Left cardiac atrium (tissue), 4 donors: ENCODE measurements at regions of chr10 and their contacts with region 1.

Region 1: DNA sequence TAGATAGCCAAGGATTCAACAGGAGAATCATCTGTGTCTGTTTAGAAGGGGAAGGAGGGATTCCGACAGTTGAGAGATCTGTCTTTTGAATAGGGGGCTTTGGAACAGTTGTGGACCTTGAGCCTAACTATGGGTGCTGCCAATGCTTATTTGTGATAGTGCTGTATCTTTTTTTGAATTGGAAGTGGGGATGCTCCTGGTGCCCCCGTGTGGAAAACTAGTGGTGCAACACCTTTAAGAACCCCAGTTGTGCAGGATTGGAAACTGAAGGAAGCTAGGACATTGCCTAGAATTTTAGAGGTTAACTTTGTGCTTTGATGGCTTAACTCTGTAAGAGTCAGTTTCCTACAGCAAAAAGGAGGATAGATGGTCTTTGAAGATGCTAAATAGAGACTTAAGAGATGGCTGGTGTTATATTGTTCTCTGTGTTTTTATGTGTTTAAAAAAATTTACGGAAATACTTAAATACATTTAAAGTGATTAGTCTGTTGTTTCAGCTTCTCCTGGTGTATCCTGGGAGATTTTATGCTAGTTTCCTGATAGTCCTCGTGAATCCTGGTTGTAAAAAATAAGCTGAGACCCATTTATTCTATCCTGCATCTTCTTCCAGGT is 69.3 kb downstream of the AP3M1 start:
- DNase-seq: peak; percentile 36
- ATAC-seq: peak; percentile 54 to 78

Region 2: GRCh38 chr10:73879296-73880173 is 201.8 kb before region 1 on chr10:
- intact Hi-C with region 1: loop called in 1 of 2 experiments (anchors 10 kb)
- DNase-seq: peak; percentile 91
- ATAC-seq: peak; percentile 93 to 96

Region 3: GRCh38 chr10:73886085-73886529 is 195.2 kb before region 1 on chr10:
- intact Hi-C with region 1: loop called (anchors 5 to 10 kb)
- DNase-seq: peak; percentile 76
- ATAC-seq: peak; percentile 79 to 83

Region 4: GRCh38 chr10:73940634-73941221 is 140.6 kb before region 1 on chr10:
- intact Hi-C with region 1: loop called in 1 of 2 experiments (anchors 5 kb)
- DNase-seq: peak; percentile 92
- ATAC-seq: peak; percentile 96 to 98

Region 5: GRCh38 chr10:74008212-74008731 is 73.0 kb before region 1 on chr10:
- intact Hi-C with region 1: loop called in 1 of 2 experiments (anchors 10 kb)
- DNase-seq: no peak
- ATAC-seq: peak in 1 of 2 donors; percentile 10